ENCODE measurements at regions of chr9 and their contacts with region 1.

Region 1: GRCh38 chr9:32378993-32379729 is 5.3 kb upstream of the ACO1 start:
- DNase-seq: peak; percentile 77 to 89 (median 85)
- H3K4me3 ChIP-seq: no peak overlapping the region
- H3K27ac ChIP-seq: no peak overlapping the region
- H3K4me1 ChIP-seq: peaks cover 3 to 13% (median 8%) of the 10 kb centered on the region in 4 experiments
- H3K27me3 ChIP-seq: peaks cover 8 to 14% (median 9%) of the 10 kb centered on the region in 5 experiments

Region 2: GRCh38 chr9:32128546-32128945 is 250.6 kb before region 1 on chr9:
- CTCF ChIA-PET with region 1: no interaction called
- POLR2A ChIA-PET with region 1: no interaction called
- DNase-seq: no peak
- H3K4me3 ChIP-seq: peak overlapping the region in 1 of 7 experiments; percentile 12
- H3K27ac ChIP-seq: no peak overlapping the region
- H3K4me1 ChIP-seq: no peaks in the 10 kb centered on the region
- H3K27me3 ChIP-seq: no peaks in the 10 kb centered on the region

Region 3: DNA sequence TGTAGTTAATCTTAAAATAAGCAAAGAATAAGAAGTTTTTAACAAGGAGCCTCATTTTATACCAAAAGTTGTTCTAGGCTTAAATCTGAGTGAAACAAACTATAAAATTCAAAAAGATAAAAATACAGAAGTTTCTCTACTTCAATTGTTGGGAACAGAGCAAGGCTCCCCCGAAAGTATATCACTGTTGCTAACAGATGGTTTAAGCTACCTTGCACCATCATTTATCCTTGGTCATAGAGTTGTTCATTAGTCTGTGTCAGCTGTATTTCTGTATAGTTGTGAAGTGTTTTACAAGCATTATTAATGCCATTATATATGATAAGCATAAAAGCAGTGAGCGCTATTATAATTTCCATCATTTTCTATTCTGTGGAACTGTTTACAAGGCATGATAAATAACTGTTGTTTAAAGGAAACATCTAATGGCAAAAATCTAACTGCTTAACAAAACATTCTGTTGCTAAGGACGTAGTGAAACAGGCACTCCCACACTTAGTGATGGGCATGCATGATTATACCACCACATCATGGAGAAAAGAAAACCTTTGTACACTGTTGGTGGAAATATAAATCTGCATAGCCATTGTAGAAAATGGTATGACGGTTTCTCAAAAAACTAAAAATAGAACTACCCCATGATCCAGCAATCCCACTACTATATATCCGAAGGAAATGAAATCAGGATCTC is 18.0 kb before region 1 on chr9:
- CTCF ChIA-PET with region 1: no interaction called
- POLR2A ChIA-PET with region 1: no interaction called
- DNase-seq: no peak
- H3K4me3 ChIP-seq: no peak overlapping the region
- H3K27ac ChIP-seq: no peak overlapping the region
- H3K4me1 ChIP-seq: no peaks in the 10 kb centered on the region
- H3K27me3 ChIP-seq: peaks cover 0 to 5% (median 2%) of the 10 kb centered on the region in 5 experiments

Region 4: GRCh38 chr9:32413424-32413823 is 34.3 kb after region 1 on chr9:
- CTCF ChIA-PET with region 1: interaction called, 13 read pairs
- POLR2A ChIA-PET with region 1: no interaction called
- DNase-seq: no peak
- H3K4me3 ChIP-seq: no peak overlapping the region
- H3K27ac ChIP-seq: no peak overlapping the region
- H3K4me1 ChIP-seq: no peaks in the 10 kb centered on the region
- H3K27me3 ChIP-seq: no peaks in the 10 kb centered on the region

Region 5: GRCh38 chr9:32526041-32526706 is 147.0 kb after region 1 on chr9 and contains the start of gene RIGI:
- CTCF ChIA-PET with region 1: interaction called, 19 read pairs
- POLR2A ChIA-PET with region 1: no interaction called
- DNase-seq: peak; percentile 88 to 90 (median 90)
- H3K4me3 ChIP-seq: peak within 1 kb of the TSS; percentile 81 to 98 (median 95)
- H3K27ac ChIP-seq: peak within 1 kb of the TSS; percentile 61 to 83
- H3K4me1 ChIP-seq: peaks cover 7 to 18% (median 13%) of the 10 kb centered on the region in 4 experiments
- H3K27me3 ChIP-seq: no peaks in the 10 kb centered on the region

Region 6: GRCh38 chr9:32579706-32580331 is 200.7 kb after region 1 on chr9:
- CTCF ChIA-PET with region 1: interaction called, 257 read pairs
- POLR2A ChIA-PET with region 1: interaction called, 3 read pairs
- DNase-seq: peak; percentile 69 to 80 (median 72)
- H3K4me3 ChIP-seq: no peak overlapping the region
- H3K27ac ChIP-seq: no peak overlapping the region
- H3K4me1 ChIP-seq: no peaks in the 10 kb centered on the region
- H3K27me3 ChIP-seq: peaks cover 0 to 14% (median 9%) of the 10 kb centered on the region in 5 experiments

Region 7: DNA sequence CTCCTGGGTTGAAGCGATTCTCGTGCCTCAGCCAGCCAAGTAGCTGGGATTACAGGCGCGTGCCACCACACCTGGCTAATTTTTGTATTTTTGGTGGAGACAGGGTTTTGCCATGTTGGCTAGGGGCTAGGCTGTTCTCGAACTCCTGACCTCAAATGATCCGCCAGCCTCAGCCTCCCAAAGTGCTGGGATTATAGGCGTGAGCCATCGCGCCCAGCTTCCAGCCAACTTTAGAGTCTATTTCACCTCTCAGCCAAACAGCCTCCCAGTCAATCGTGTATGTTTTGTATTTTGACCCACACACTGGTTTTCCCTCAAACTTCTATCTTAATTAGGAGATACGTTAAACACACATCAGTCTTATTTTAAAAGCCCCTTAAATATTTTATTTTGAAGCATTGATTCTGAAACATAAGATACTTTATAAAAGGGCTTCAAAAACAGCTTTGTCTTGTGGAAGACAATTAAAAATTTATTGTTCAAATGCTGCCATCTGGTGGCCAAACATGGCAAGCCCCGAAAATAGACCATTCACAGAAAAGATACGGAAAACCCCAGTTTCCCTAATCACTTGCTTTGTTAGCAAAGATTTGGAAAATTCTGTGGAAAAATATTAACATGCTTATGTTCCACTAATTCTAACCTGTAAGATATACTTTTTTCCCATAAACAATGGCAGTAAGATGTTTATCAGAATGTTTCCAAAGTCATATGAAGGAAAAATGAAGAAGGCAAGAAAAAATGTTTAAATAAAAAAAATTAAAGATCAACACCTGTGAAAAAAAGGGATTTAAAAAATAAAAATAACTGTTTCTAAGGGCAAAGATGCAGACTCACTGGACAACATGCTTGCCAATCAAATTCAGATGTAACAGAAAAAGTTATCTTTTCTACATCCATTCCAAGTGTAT is 589.2 kb after region 1 on chr9:
- CTCF ChIA-PET with region 1: interaction called, 62 read pairs
- POLR2A ChIA-PET with region 1: no interaction called
- DNase-seq: peak; percentile 38 to 66 (median 48)
- H3K4me3 ChIP-seq: no peak overlapping the region
- H3K27ac ChIP-seq: no peak overlapping the region
- H3K4me1 ChIP-seq: no peaks in the 10 kb centered on the region
- H3K27me3 ChIP-seq: no peaks in the 10 kb centered on the region